ENCODE measurements at regions of chr1 and their contacts with region 1.

Region 1: DNA sequence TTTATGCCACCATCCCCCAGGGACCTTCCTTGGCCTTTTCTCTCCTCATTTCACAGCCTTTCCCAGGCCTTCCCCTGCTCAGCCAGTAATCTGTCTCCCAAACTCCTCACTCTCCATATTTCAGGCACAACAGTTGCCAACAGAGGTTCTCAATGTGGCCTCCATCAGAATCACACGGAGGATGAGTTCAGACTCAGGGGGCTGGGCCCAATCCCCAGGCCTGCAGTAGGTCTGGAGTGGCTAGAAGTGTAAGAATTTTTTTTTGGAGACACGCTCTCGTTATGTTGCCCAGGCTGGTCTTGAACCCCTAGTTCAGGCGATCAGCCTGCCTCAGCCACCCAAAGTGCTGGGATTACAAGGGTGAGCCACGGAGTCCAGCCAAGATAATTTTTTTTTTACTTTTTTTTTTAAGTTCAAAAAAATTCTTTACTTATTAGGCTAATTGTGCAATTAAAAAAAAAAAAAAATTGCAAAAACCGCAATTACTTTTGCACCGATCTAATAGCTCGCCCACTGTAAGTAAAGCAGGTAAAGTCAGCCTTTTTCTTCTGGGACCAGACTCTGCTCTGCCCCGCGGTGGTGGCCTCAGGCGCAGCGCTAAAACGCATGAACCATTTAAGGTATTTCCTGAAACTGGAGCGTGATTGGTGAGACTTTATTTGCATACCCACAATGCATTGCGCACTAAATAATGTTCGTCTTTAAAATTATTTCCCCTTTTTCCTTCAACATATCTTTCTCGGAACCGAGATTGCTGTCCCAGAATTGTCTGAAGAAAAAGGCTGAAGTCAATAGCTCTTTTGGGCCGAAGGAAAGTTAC is 18.7 kb downstream of the KIAA2013 start:
- DNase-seq: peak; percentile 74
- H3K4me3 ChIP-seq: no peak overlapping the region
- H3K27me3 ChIP-seq: no peaks in the 10 kb centered on the region
- CTCF ChIP-seq: peak; percentile 84

Region 2: DNA sequence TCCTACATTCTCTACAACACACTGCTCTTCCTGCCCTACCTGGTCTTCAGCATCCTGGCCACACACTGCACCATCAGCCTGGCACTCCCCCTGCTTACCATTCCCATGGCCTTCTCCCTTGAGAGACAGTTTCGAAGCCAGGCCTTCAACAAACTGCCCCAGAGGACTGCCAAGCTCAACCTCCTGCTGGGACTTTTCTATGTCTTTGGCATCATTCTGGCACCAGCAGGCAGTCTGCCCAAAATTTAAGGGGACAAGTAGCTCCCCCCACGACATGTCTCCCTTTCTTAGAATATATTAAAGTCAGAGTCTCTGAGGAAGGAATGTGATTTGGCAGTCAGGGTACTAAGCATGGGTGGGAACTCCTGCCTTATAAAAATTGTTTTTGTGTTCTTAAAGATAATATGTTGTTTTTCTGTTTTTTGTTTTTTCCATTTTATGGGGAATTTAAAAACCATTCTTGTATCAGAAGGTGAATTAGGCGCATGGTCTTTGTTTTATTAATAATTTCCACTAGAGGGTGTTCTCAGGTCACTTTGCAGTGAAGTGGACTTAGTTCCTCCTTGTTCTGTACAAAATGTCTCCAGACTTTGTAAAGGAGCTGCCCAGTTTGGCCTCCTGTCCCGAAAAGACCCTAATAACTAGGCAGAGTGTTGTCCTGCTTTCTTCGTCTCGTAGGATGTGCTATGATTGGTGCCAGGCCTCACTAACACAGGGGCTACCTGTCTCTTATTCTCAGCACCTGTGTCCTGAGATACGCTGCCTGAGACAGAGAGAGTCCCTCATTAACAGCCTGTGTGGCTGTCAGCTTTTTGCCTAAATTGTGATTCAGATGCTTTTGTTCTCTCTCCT is 621.4 kb before region 1 on chr1:
- CTCF ChIA-PET with region 1: no interaction called
- POLR2A ChIA-PET with region 1: no interaction called
- DNase-seq: no peak
- H3K4me3 ChIP-seq: no peak overlapping the region
- H3K27me3 ChIP-seq: no peaks in the 10 kb centered on the region
- CTCF ChIP-seq: peak; percentile 35; the same call in 1 of the 2 replicates

Region 3: GRCh38 chr1:11661103-11661502 is 246.4 kb before region 1 on chr1:
- CTCF ChIA-PET with region 1: no interaction called
- POLR2A ChIA-PET with region 1: interaction called, 13 read pairs
- DNase-seq: no peak
- H3K4me3 ChIP-seq: no peak overlapping the region
- H3K27me3 ChIP-seq: no peaks in the 10 kb centered on the region
- CTCF ChIP-seq: no peak

Region 4: DNA sequence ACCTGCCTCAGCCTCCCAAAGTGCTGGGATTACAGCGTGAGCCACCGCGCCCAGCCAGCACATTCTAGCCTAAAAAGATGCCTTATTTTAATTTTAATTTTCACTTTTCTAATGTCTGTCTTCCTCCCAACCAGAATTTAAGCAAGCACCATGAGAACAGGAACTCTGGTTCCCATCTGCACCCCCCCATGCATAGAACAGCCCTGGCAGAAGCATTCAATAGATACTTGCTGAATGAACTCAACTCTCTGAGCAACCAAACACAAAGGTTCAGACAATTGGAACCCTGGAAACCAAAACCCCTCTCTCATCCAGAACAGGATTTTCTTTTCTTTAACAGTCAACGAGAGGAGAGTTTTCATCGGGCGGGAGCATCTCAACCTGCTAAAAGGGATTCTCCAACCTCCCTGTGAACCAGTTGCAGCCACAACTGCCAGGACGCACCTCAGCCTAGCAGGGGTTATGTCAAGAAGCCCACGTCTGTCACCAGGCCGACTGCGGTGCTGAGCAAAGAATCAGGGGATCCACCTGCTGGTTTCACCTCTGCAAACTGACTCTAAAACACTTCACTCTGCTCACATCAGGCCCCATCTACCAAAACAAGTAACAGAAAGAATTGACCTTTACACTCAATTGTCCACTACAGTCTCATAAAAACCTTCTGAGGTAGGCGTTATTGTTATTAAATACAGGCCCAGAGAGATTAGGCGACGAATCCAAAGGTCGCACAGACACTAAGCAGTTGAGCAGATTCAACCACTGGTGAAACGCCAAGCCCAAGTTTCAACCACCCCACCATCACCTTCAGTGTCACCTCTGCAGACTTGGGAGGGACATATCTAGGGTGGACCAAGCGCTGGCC is 17.1 kb after region 1 on chr1:
- CTCF ChIA-PET with region 1: interaction called, 3 read pairs
- POLR2A ChIA-PET with region 1: interaction called, 10 read pairs
- DNase-seq: no peak
- H3K4me3 ChIP-seq: peak overlapping the region; percentile 49
- H3K27me3 ChIP-seq: no peaks in the 10 kb centered on the region
- CTCF ChIP-seq: no peak